Activated T-helper 1 cell treated with anti-CD3 and anti-CD28 coated beads, Interleukin-12 subunit alpha, Interleukin-12 subunit beta, Interleukin-2, Interleukin-4 antibody, amounts not matched to agents 30 ng/mL and 10 ng/mL and 1 ng/mL, durations not matched to agents 14 hours and 24 hours and 36 hours (primary cell): ENCODE measurements at regions of chr14 and their contacts with region 1.

Region 1: GRCh38 chr14:97458661-97459579 is 661.7 kb downstream of the VRK1 start:
- DNase-seq: peak; percentile 73
- H3K4me3 Mint-ChIP-seq: peak overlapping the region; percentile 92
- H3K27ac Mint-ChIP-seq: peak overlapping the region; percentile 100
- H3K4me1 Mint-ChIP-seq: peaks cover 55% of the 10 kb centered on the region
- H3K27me3 Mint-ChIP-seq: no peaks in the 10 kb centered on the region

Region 2: GRCh38 chr14:97290977-97291376 is 167.9 kb before region 1 on chr14:
- intact Hi-C with region 1: loop called (anchors 5 kb)
- DNase-seq: no peak
- H3K4me3 Mint-ChIP-seq: no peak overlapping the region
- H3K27ac Mint-ChIP-seq: no peak overlapping the region
- H3K4me1 Mint-ChIP-seq: peaks cover 20% of the 10 kb centered on the region
- H3K27me3 Mint-ChIP-seq: peaks cover 53% of the 10 kb centered on the region

Region 3: DNA sequence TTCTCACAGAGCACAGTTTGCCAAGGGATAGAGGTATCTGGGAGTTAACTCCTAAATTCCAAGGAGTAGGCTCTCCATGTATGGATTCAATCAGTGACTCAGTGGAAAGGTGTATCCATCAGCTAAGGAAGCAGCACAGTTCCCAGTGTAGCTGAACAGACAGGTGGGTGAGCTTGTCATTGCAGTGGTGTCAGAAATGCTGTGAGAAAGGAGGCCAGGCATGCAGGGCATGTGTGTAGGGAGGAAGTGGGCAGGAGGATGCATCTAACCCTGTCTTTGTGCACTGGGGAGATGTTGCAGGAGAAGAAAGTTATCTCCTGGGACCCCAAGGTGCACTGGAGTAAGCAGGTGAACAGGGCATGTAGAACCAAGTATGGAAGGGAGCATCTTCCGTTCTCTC is 122.7 kb before region 1 on chr14:
- intact Hi-C with region 1: no loop called
- DNase-seq: no peak
- H3K4me3 Mint-ChIP-seq: no peak overlapping the region
- H3K27ac Mint-ChIP-seq: no peak overlapping the region
- H3K4me1 Mint-ChIP-seq: peaks cover 25% of the 10 kb centered on the region
- H3K27me3 Mint-ChIP-seq: no peaks in the 10 kb centered on the region

Region 4: GRCh38 chr14:97380539-97380941 is 78.4 kb before region 1 on chr14:
- intact Hi-C with region 1: loop called (anchors 1 kb)
- DNase-seq: peak; percentile 22
- H3K4me3 Mint-ChIP-seq: peak overlapping the region; percentile 25
- H3K27ac Mint-ChIP-seq: peak overlapping the region; percentile 14
- H3K4me1 Mint-ChIP-seq: peaks cover 52% of the 10 kb centered on the region
- H3K27me3 Mint-ChIP-seq: no peaks in the 10 kb centered on the region

Region 5: GRCh38 chr14:97442363-97442762 is 16.6 kb before region 1 on chr14:
- intact Hi-C with region 1: loop called (anchors 1 kb)
- DNase-seq: peak; percentile 26
- H3K4me3 Mint-ChIP-seq: peak overlapping the region; percentile 61
- H3K27ac Mint-ChIP-seq: peak overlapping the region; percentile 90
- H3K4me1 Mint-ChIP-seq: peaks cover 36% of the 10 kb centered on the region
- H3K27me3 Mint-ChIP-seq: no peaks in the 10 kb centered on the region

Region 6: GRCh38 chr14:97620066-97620465 is 161.1 kb after region 1 on chr14:
- intact Hi-C with region 1: loop called (anchors 1 kb)
- DNase-seq: no peak
- H3K4me3 Mint-ChIP-seq: peak overlapping the region; percentile 79
- H3K27ac Mint-ChIP-seq: peak overlapping the region; percentile 56
- H3K4me1 Mint-ChIP-seq: peaks cover 47% of the 10 kb centered on the region
- H3K27me3 Mint-ChIP-seq: peaks cover 4% of the 10 kb centered on the region

Region 7: DNA sequence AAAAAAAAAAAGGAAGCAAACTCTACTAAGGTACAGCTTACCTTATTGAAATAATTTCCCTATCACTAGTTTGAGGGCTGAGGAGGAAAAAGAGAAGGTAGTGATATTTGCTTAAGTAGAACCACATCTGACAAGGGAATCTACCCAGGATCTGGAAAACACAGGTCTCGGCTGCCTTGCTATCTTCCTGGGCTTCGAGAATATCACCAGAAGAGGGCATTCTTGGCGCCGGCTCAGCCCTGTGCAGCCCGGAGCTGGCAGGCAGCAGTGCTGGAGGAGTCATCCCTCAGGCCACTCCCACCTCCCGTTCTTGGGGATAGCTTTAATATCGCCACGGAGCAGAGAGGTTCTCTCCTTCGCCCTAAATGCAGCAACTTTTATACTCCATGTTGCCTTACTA is 519.4 kb after region 1 on chr14:
- intact Hi-C with region 1: loop called (anchors 5 kb)
- DNase-seq: peak; percentile 70
- H3K4me3 Mint-ChIP-seq: peak overlapping the region; percentile 84
- H3K27ac Mint-ChIP-seq: peak overlapping the region; percentile 87
- H3K4me1 Mint-ChIP-seq: peaks cover 62% of the 10 kb centered on the region
- H3K27me3 Mint-ChIP-seq: no peaks in the 10 kb centered on the region

Region 8: GRCh38 chr14:99192028-99192621 is 1733.2 kb after region 1 on chr14:
- intact Hi-C with region 1: loop called (anchors 5 kb)
- DNase-seq: no peak
- H3K4me3 Mint-ChIP-seq: peak overlapping the region; percentile 90
- H3K27ac Mint-ChIP-seq: peak overlapping the region; percentile 99
- H3K4me1 Mint-ChIP-seq: peaks cover 93% of the 10 kb centered on the region
- H3K27me3 Mint-ChIP-seq: no peaks in the 10 kb centered on the region